Aorta (tissue), 5 donors: ENCODE measurements at regions of chr17 and their contacts with region 1.

Region 1: DNA sequence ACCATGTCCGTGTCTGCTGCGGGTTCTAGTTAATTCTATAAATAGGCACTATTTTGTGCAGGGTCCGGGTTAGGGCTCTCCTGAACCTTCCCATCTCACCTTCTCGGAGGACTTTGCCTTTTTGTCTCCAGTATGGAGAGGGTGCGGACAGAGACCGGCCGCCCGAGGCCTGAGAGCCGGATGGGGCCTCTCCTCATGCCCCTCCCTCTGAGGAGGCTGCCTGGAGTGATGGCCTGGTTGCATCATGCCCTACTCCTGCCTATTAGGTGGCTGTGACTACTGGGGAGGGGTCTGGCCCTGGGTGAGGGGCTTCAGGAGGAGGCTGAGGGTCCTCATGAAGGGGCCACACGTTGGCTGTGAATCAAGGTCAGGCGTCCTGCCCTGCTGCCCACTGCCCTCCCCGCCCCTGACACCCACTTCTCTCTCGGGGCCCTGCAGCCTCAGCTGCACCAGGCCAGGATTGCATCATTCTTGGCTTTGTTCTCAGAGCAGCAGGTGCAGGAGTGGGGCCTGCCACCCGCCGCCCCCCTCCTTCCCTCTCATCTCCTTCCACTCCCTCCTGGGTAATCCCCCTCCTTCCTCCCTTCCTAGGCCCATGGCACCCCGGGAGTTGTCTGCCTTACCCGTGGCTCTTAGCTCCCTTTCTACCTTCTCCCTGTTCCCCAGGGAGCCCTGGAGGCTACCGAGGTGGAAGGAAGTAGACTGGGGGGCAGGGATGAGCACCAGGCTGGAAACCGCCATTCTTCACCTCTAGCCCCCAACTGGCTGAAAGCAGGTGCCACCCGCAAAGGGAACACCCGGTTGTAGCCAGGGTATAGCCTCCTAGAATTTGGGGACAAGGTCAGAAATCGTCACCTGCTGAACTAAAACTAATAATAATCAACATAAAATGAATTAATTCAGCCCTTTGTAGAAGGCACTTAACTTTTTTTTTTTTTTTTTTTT is 12.7 kb upstream of the ARHGAP23 start:
- DNase-seq: no peak
- ATAC-seq: no peak
- H3K4me3 ChIP-seq: no peak overlapping the region
- H3K27ac ChIP-seq: no peak overlapping the region
- H3K4me1 ChIP-seq: no peaks in the 10 kb centered on the region
- H3K27me3 ChIP-seq: no peaks in the 10 kb centered on the region

Region 2: GRCh38 chr17:38349097-38349730 is 66.3 kb before region 1 on chr17:
- intact Hi-C with region 1: loop called (anchors 1 kb)
- DNase-seq: peak; percentile 89 to 95
- ATAC-seq: peak; percentile 68
- H3K4me3 ChIP-seq: no peak overlapping the region
- H3K27ac ChIP-seq: peak overlapping the region in 1 of 2 donors; percentile 58
- H3K4me1 ChIP-seq: peaks cover 2 to 3% of the 10 kb centered on the region in 2 donors
- H3K27me3 ChIP-seq: no peaks in the 10 kb centered on the region

Region 3: GRCh38 chr17:38369124-38369886 is 46.2 kb before region 1 on chr17:
- intact Hi-C with region 1: no loop called
- DNase-seq: no peak
- ATAC-seq: no peak
- H3K4me3 ChIP-seq: no peak overlapping the region
- H3K27ac ChIP-seq: no peak overlapping the region
- H3K4me1 ChIP-seq: no peaks in the 10 kb centered on the region
- H3K27me3 ChIP-seq: no peaks in the 10 kb centered on the region

Region 4: DNA sequence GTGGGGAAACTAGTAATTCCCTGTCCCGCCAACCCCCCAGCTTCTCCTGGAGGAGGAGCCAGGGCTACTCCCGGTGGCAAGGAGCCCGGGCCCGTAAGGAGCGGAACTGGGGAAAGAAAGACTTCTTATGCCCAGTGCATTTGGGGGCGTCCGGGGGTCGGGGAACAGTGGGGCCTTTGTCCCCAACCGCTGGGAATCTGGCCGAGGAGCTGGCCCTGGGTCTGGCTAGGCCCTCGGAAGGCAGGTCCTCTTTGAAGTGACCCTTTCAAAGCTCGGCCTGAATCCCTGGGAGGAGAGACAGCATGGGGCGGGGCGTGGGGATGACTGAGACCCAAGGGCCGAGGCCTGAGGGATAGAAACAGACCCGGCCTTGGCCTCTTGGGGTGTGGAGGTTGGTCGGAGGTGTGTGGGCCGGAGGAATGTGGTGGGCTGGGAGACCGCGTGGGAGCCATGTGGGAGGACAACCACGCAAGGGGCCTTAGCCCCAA is 18.7 kb after region 1 on chr17:
- intact Hi-C with region 1: no loop called
- DNase-seq: no peak
- ATAC-seq: no peak
- H3K4me3 ChIP-seq: no peak overlapping the region
- H3K27ac ChIP-seq: no peak overlapping the region
- H3K4me1 ChIP-seq: peaks cover 2% of the 10 kb centered on the region in 2 donors
- H3K27me3 ChIP-seq: no peaks in the 10 kb centered on the region

Region 5: GRCh38 chr17:38982858-38983746 is 567.6 kb after region 1 on chr17:
- intact Hi-C with region 1: no loop called
- DNase-seq: no peak
- ATAC-seq: peak; percentile 82
- H3K4me3 ChIP-seq: no peak overlapping the region
- H3K27ac ChIP-seq: no peak overlapping the region
- H3K4me1 ChIP-seq: no peaks in the 10 kb centered on the region
- H3K27me3 ChIP-seq: no peaks in the 10 kb centered on the region